T-cell (primary cell): ENCODE measurements at regions of chr1 and their contacts with region 1.

Region 1: GRCh38 chr1:54396261-54396933 is 9.8 kb downstream of the SSBP3 start:
- DNase-seq: no peak
- ATAC-seq: no peak
- H3K4me3 ChIP-seq: no peak overlapping the region
- H3K4me3 Mint-ChIP-seq: no peak overlapping the region
- H3K27ac ChIP-seq: no peak overlapping the region
- H3K27ac Mint-ChIP-seq: peak overlapping the region in 1 of 2 donors; percentile 64
- H3K4me1 ChIP-seq: peaks cover 3 to 35% of the 10 kb centered on the region in 2 experiments
- H3K4me1 Mint-ChIP-seq: peaks cover 40 to 59% (median 52%) of the 10 kb centered on the region in 3 donors
- H3K27me3 ChIP-seq: no peaks in the 10 kb centered on the region
- H3K27me3 Mint-ChIP-seq: no peaks in the 10 kb centered on the region

Region 2: GRCh38 chr1:54037476-54037875 is 358.9 kb before region 1 on chr1:
- CTCF ChIA-PET with region 1: no interaction called
- POLR2A ChIA-PET with region 1: interaction called in 1 of 2 experiments, 17 read pairs
- DNase-seq: no peak
- ATAC-seq: no peak
- H3K4me3 ChIP-seq: no peak overlapping the region
- H3K4me3 Mint-ChIP-seq: no peak overlapping the region
- H3K27ac ChIP-seq: no peak overlapping the region
- H3K27ac Mint-ChIP-seq: peak overlapping the region in 1 of 2 donors; percentile 17
- H3K4me1 ChIP-seq: no peaks in the 10 kb centered on the region
- H3K4me1 Mint-ChIP-seq: peaks cover 4 to 9% (median 4%) of the 10 kb centered on the region in 3 donors
- H3K27me3 ChIP-seq: no peaks in the 10 kb centered on the region
- H3K27me3 Mint-ChIP-seq: no peaks in the 10 kb centered on the region

Region 3: GRCh38 chr1:54406339-54407153 is 10.1 kb after region 1 on chr1 and contains the start of gene SSBP3:
- CTCF ChIA-PET with region 1: no interaction called
- POLR2A ChIA-PET with region 1: no interaction called
- DNase-seq: peak; percentile 84 to 96 (median 90)
- ATAC-seq: peak; percentile 93 to 96 (median 95)
- H3K4me3 ChIP-seq: peak within 1 kb of the TSS; percentile 76 to 87
- H3K4me3 Mint-ChIP-seq: peak within 1 kb of the TSS; percentile 90 to 92 (median 91)
- H3K27ac ChIP-seq: peak within 1 kb of the TSS; percentile 70
- H3K27ac Mint-ChIP-seq: peak within 1 kb of the TSS; percentile 86 to 97
- H3K4me1 ChIP-seq: peaks cover 29 to 70% of the 10 kb centered on the region in 2 experiments
- H3K4me1 Mint-ChIP-seq: peaks cover 59 to 72% (median 70%) of the 10 kb centered on the region in 3 donors
- H3K27me3 ChIP-seq: no peaks in the 10 kb centered on the region
- H3K27me3 Mint-ChIP-seq: no peaks in the 10 kb centered on the region
- total RNA-seq, gene SSBP3: 51.5 to 84.5 (median 69.2) TPM

Region 4: DNA sequence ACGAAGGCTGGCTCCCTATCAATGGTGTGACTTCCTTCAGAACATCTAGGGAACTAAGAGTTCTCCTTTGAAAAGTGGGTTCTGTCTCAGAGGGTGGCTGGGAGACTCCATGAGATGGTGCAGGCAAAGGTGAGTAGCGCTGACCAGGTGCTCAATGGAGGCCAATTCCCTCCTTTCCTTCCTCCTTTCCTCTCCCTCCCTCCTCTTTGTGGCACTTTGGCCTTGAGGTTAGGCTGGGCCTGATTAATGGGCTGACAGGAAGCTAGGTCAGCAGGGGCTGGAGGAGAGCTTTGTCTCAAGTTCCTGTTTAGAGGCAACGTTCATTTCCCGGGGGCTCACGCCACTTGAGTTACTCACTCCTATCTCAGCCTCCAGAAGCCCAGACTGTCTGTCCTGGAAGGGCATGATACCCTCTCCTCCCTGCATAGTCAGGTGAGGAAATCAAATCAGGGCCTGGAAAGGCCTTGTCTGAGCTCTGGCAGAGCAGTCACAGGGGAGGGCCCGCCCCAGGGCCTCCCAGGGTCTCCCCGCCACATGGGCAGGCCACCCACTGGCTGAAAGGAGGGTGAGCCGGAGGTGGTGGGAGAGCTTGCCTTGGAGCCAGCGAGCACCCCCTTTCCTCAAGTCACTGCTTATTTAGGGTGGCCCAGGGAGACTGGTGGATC is 68.2 kb after region 1 on chr1:
- CTCF ChIA-PET with region 1: no interaction called
- POLR2A ChIA-PET with region 1: interaction called in 1 of 2 experiments, 14 read pairs
- DNase-seq: peak in 1 of 35 experiments; percentile 13
- ATAC-seq: no peak
- H3K4me3 ChIP-seq: no peak overlapping the region
- H3K4me3 Mint-ChIP-seq: no peak overlapping the region
- H3K27ac ChIP-seq: peak overlapping the region; percentile 10
- H3K27ac Mint-ChIP-seq: peak overlapping the region in 1 of 2 donors; percentile 76
- H3K4me1 ChIP-seq: peaks cover 18 to 55% of the 10 kb centered on the region in 2 experiments
- H3K4me1 Mint-ChIP-seq: peaks cover 27 to 45% (median 37%) of the 10 kb centered on the region in 3 donors
- H3K27me3 ChIP-seq: no peaks in the 10 kb centered on the region
- H3K27me3 Mint-ChIP-seq: no peaks in the 10 kb centered on the region